ENCODE measurements at regions of chr12 and their contacts with region 1.

Region 1: DNA sequence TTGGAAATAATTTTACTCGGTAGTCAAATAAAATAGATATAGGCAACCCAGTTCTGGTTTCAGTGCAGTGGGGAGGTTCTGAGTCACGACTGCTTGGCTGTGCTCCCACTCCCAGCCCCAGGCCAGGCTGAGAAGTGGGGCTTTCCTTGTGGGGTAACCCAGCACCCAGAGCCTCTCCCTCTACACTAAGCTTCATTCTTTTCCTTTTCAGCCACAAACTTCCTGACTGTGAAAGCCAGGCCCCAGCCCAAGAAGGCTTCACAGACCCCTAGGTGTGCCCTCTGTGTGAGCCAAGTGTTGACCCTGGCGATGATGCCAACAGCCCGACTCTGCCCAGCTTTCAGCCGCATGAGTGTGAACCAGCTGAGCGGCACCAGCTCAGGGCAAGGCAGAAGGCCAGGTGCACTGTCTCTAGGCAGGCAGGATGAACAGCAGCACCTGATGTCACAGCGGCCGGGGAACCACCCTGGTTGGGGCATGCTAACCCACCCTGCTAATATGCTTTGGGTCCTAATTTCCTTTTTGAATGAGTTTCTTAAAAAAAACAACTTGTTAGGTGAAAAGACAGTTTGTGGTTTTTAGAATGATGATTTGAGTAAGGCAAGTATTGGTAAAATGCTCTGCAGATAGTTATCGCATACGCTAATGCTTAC is 42.2 kb upstream of the ATP23 start:
- DNase-seq: no peak
- H3K4me3 ChIP-seq: no peak overlapping the region
- H3K27ac ChIP-seq: peak overlapping the region in 1 of 2 donors; percentile 6
- H3K4me1 ChIP-seq: peaks cover 49% of the 10 kb centered on the region
- H3K27me3 ChIP-seq: no peaks in the 10 kb centered on the region
- CTCF ChIP-seq: no peak
- POLR2A ChIP-seq: no peak

Region 2: GRCh38 chr12:57832966-57833365 is 66.2 kb before region 1 on chr12:
- intact Hi-C with region 1: loop called (anchors 5 kb)
- DNase-seq: no peak
- H3K4me3 ChIP-seq: no peak overlapping the region
- H3K27ac ChIP-seq: peak overlapping the region in 1 of 2 donors; percentile 37
- H3K4me1 ChIP-seq: peaks cover 76% of the 10 kb centered on the region
- H3K27me3 ChIP-seq: no peaks in the 10 kb centered on the region
- CTCF ChIP-seq: no peak
- POLR2A ChIP-seq: no peak

Region 3: GRCh38 chr12:57993025-57993424 is 93.9 kb after region 1 on chr12:
- intact Hi-C with region 1: no loop called
- DNase-seq: no peak
- H3K4me3 ChIP-seq: no peak overlapping the region
- H3K27ac ChIP-seq: no peak overlapping the region
- H3K4me1 ChIP-seq: no peaks in the 10 kb centered on the region
- H3K27me3 ChIP-seq: no peaks in the 10 kb centered on the region
- CTCF ChIP-seq: no peak
- POLR2A ChIP-seq: no peak

Measured in testis (tissue), 5 donors.